Panc1 (cell line): ENCODE measurements at regions of chr11 and their contacts with region 1.

Region 1: GRCh38 chr11:20337526-20338154 is 25.9 kb upstream of the HTATIP2 start:
- DNase-seq: no peak
- ATAC-seq: peak; percentile 85; the same call in 1 of the 2 replicates
- H3K4me3 ChIP-seq: no peak overlapping the region
- H3K27ac ChIP-seq: no peak overlapping the region
- H3K4me1 ChIP-seq: no peaks in the 10 kb centered on the region
- H3K27me3 ChIP-seq: peaks cover 32% of the 10 kb centered on the region
- CTCF ChIP-seq: peak; percentile 69

Region 2: DNA sequence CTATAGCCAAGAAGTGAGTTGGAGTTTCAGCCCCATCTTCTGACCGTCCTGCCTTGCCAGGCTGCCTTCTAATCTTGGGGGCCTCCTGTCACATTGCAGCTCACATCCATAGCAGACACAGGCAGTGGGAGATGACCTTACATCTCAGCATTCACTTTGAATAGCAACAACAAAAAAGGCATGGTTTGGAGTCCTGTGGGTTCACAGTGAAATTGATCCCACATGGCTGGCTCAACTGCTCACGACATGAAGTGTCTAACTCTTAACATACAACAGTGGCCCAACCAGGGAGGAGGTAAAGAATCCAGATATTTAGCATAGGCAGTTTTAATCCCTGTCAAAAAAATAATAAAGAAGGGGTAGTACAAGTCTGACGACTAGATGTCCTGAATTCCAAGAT is 215.5 kb before region 1 on chr11:
- CTCF ChIA-PET with region 1: interaction called, 10 read pairs
- POLR2A ChIA-PET with region 1: no interaction called
- in situ Hi-C with region 1: no loop called
- intact Hi-C with region 1: no loop called
- DNase-seq: no peak
- ATAC-seq: no peak
- H3K4me3 ChIP-seq: no peak overlapping the region
- H3K27ac ChIP-seq: no peak overlapping the region
- H3K4me1 ChIP-seq: no peaks in the 10 kb centered on the region
- H3K27me3 ChIP-seq: no peaks in the 10 kb centered on the region
- CTCF ChIP-seq: no peak